Ovary (tissue), 10 donors: ENCODE measurements at regions of chr16 and their contacts with region 1.

Region 1: GRCh38 chr16:8572919-8573724 is 17.2 kb downstream of the TMEM114 start:
- DNase-seq: no peak
- H3K4me3 ChIP-seq: no peak overlapping the region
- H3K27ac ChIP-seq: no peak overlapping the region
- H3K4me1 ChIP-seq: no peaks in the 10 kb centered on the region
- H3K27me3 ChIP-seq: no peaks in the 10 kb centered on the region
- CTCF ChIP-seq: no peak
- EP300 ChIP-seq: no peak
- POLR2A ChIP-seq: peak; percentile 7

Region 2: GRCh38 chr16:8063159-8063558 is 510.0 kb before region 1 on chr16:
- intact Hi-C with region 1: no loop called
- DNase-seq: no peak
- H3K4me3 ChIP-seq: no peak overlapping the region
- H3K27ac ChIP-seq: no peak overlapping the region
- H3K4me1 ChIP-seq: no peaks in the 10 kb centered on the region
- H3K27me3 ChIP-seq: no peaks in the 10 kb centered on the region
- CTCF ChIP-seq: no peak
- EP300 ChIP-seq: no peak
- POLR2A ChIP-seq: no peak

Region 3: GRCh38 chr16:8712589-8713361 is 139.7 kb after region 1 on chr16:
- intact Hi-C with region 1: no loop called
- DNase-seq: no peak
- H3K4me3 ChIP-seq: no peak overlapping the region
- H3K27ac ChIP-seq: no peak overlapping the region
- H3K4me1 ChIP-seq: no peaks in the 10 kb centered on the region
- H3K27me3 ChIP-seq: no peaks in the 10 kb centered on the region
- CTCF ChIP-seq: no peak
- EP300 ChIP-seq: no peak
- POLR2A ChIP-seq: no peak

Region 4: GRCh38 chr16:8788578-8789172 is 215.6 kb after region 1 on chr16:
- intact Hi-C with region 1: loop called in 2 of 4 experiments (anchors 5 to 10 kb)
- DNase-seq: no peak
- H3K4me3 ChIP-seq: no peak overlapping the region
- H3K27ac ChIP-seq: no peak overlapping the region
- H3K4me1 ChIP-seq: no peaks in the 10 kb centered on the region
- H3K27me3 ChIP-seq: no peaks in the 10 kb centered on the region
- CTCF ChIP-seq: no peak
- EP300 ChIP-seq: no peak
- POLR2A ChIP-seq: no peak

Region 5: DNA sequence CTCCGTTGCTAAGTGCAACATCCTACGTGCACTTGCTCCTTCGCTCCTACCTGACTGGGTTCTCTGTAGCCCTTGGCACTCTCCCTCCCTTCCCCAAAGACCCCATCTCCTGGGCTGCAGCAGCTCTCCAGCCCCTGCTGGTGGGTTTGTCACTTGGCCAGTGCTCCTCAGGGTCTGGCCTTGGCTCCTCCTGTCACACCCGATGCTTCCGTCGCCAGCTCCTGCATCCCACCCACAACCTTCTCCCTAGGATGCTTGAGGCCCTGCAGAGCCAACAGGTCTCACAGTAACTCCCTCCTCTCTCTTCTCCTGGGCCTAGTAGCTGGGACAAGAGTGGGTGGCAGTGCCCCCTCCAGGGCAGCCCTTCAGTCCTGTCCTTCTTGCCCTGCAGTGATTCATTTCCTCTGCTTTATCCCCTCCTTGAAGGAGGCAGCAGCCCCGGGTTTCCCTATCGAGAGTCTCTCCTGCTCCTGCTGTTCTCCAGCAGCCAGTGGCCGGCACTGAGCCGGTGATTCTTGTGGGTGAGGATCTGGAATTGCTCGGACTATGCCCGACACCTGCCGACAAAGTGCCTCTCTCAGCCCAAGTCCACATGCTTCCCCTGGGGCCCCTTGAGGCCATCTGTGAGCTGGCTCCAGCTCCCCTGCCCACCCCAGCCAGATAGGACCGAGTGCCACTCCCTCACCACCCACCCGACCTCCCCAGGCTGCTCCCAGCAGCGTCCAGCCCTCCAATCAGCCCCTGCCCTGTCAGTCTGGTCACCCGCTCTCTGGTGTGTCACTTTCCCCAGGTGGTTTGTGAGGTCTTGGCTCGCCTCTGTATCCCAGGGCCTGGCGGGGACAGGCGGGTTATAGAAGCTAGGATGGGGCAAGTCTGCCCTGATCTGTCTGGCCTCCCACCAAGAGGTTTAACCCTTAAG is 312.8 kb after region 1 on chr16:
- intact Hi-C with region 1: loop called in 3 of 4 experiments (anchors 5 to 10 kb)
- DNase-seq: peak in 2 of 5 donors; percentile 16 to 36
- H3K4me3 ChIP-seq: no peak overlapping the region
- H3K27ac ChIP-seq: no peak overlapping the region
- H3K4me1 ChIP-seq: no peaks in the 10 kb centered on the region
- H3K27me3 ChIP-seq: no peaks in the 10 kb centered on the region
- CTCF ChIP-seq: no peak
- EP300 ChIP-seq: no peak
- POLR2A ChIP-seq: no peak

Region 6: DNA sequence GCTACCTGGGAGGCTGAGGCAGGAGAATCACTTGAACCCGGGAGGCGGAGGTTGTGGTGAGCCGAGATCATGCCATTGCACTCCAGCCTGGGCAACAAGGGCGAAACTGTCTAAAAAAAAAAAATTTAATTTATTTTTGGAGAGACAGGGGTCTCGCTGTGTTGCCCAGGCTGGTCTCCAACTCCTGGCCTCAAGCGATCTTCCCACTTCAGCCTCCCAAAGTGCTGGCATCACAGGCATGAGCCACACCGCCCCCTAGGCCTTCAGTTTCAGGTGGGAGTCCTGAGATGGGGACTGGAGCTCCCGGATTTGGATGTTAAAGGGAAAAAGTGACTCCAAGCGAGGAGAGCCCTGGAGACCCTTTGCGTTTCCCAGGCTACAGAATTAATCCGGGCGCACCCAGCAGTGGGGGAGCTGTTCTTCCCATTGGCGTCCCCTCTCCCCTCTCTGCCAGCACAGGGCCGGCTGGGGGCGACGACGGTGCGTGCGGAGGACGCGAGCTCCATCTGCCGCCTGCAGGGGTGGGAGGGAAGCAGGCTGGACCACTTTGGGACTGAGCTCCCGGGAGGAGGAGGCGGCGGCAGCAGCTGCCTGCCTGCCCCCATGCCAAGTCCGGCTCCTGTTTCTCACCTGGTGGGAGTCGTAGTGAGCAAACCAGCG is 439.9 kb after region 1 on chr16:
- intact Hi-C with region 1: loop called in 1 of 4 experiments (anchors 10 kb)
- DNase-seq: peak in 1 of 5 donors; percentile 31
- H3K4me3 ChIP-seq: no peak overlapping the region
- H3K27ac ChIP-seq: no peak overlapping the region
- H3K4me1 ChIP-seq: peaks cover 2% of the 10 kb centered on the region
- H3K27me3 ChIP-seq: no peaks in the 10 kb centered on the region
- CTCF ChIP-seq: no peak
- EP300 ChIP-seq: no peak
- POLR2A ChIP-seq: no peak